PC-3 (cell line): ENCODE measurements at regions of chr1 and their contacts with region 1.

Region 1: DNA sequence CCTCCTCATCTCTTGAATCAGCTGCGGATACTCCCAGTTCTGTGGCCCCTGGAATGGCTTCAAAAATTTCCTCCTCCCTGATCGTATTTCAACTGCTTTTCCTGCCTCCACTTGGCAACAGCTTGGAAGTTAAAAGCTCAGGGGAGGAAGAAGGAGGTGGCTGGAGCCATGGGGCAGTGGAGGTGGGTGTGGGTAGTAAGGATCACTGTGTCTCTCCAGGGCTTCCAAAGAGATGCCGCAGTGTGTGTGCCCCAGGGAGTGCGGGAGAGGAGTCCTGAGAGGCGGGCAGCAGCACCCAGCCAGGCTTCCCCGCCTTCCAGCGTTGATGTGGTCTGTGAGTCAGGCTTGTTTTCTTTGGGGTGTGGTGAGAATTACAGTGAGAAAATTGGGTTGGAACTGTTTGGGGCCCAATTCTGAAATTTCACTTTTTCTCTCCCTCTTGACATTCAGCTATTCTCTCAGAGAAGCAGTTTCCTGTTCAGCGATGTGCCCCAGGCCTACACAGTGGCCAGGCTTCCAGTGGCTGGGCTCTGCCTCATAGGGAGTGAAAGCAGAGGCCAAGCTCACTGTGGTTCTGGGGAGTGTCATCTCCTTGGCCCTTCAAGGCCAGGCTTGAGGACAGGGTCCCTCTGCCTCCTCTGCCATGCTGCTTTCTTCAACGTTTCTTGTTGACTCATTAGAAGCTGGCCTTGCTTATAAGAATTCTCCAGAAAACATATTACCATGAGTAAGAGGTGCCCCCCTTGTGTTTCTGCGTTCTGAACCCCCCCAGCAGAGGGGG is 69.0 kb downstream of the PGM1 start:
- DNase-seq: peak; percentile 93
- ATAC-seq: peak; percentile 81
- H3K4me3 ChIP-seq: peak overlapping the region; percentile 41; the same call in 1 of the 2 replicates
- H3K27ac ChIP-seq: peak overlapping the region; percentile 99
- H3K4me1 ChIP-seq: peaks cover 48% of the 10 kb centered on the region
- H3K27me3 ChIP-seq: no peaks in the 10 kb centered on the region
- CTCF ChIP-seq: no peak

Region 2: GRCh38 chr1:63624911-63625310 is 37.3 kb before region 1 on chr1:
- CTCF ChIA-PET with region 1: no interaction called
- POLR2A ChIA-PET with region 1: no interaction called
- intact Hi-C with region 1: loop called (anchors 1 kb)
- DNase-seq: peak; percentile 16
- ATAC-seq: peak; percentile 56
- H3K4me3 ChIP-seq: no peak overlapping the region
- H3K27ac ChIP-seq: no peak overlapping the region
- H3K4me1 ChIP-seq: peaks cover 16% of the 10 kb centered on the region
- H3K27me3 ChIP-seq: no peaks in the 10 kb centered on the region
- CTCF ChIP-seq: no peak

Region 3: GRCh38 chr1:63683759-63684158 is 21.5 kb after region 1 on chr1:
- CTCF ChIA-PET with region 1: no interaction called
- POLR2A ChIA-PET with region 1: no interaction called
- intact Hi-C with region 1: no loop called
- DNase-seq: no peak
- ATAC-seq: no peak
- H3K4me3 ChIP-seq: no peak overlapping the region
- H3K27ac ChIP-seq: no peak overlapping the region
- H3K4me1 ChIP-seq: no peaks in the 10 kb centered on the region
- H3K27me3 ChIP-seq: no peaks in the 10 kb centered on the region
- CTCF ChIP-seq: no peak